ENCODE measurements at regions of chr1 and their contacts with region 1.

Region 1: GRCh38 chr1:110619412-110620249 is 13.5 kb upstream of the KCNA2 start:
- DNase-seq: peak; percentile 90
- H3K4me3 ChIP-seq: peak overlapping the region; percentile 64
- H3K27ac ChIP-seq: no peak overlapping the region
- H3K4me1 ChIP-seq: peaks cover 29% of the 10 kb centered on the region
- CTCF ChIP-seq: peak; percentile 98

Region 2: DNA sequence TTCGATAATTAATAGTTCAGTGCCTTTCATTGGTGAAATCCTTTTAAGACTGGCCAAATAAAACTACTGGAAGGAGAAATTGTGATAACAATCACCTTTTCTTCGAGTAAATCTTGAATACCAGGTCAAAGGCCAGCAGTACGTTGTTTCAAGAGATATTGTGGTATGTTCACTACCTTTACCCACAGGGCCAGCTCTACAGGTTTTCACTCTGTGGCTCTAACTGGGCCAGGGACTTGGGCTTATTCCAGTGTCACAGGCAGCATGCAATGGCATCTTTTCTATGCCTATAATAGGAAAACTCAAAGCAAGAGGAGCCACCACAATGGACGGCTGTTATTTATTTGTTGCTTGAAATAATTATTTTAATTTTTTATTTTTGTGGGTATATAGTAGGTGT is 370.9 kb after region 1 on chr1:
- CTCF ChIA-PET with region 1: no interaction called
- POLR2A ChIA-PET with region 1: no interaction called
- intact Hi-C with region 1: loop called (anchors 10 kb)
- DNase-seq: no peak
- H3K4me3 ChIP-seq: no peak overlapping the region
- H3K27ac ChIP-seq: no peak overlapping the region
- H3K4me1 ChIP-seq: no peaks in the 10 kb centered on the region
- CTCF ChIP-seq: no peak